ENCODE measurements at regions of chr20 and their contacts with region 1.

Region 1: DNA sequence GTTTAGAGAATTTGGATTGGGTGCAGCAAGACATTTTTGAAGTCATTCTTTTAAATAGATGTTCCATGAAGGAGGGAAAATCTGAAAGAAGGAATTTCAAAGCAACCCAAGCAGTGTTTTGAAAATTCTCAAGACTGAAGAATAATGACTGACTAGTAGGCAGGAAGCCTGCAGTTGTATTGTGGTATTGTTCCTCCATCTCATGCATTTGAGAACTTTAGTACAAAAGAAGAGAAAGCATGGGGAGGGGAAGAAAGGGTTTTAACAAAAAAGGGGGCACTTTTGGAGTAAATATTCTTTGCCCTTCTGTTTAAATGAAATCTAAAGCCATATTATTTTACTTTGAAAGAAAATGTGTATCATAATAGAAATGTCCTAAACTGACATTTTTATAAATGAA is 6.6 kb downstream of the NCOA3 start:
- DNase-seq: no peak
- ATAC-seq: no peak
- H3K4me3 ChIP-seq: no peak overlapping the region
- H3K27ac ChIP-seq: no peak overlapping the region
- H3K4me1 ChIP-seq: peaks cover 32% of the 10 kb centered on the region
- H3K27me3 ChIP-seq: no peaks in the 10 kb centered on the region
- CTCF ChIP-seq: no peak

Region 2: GRCh38 chr20:47196091-47197081 is 311.9 kb before region 1 on chr20:
- CTCF ChIA-PET with region 1: no interaction called
- POLR2A ChIA-PET with region 1: no interaction called
- intact Hi-C with region 1: loop called (anchors 5 kb)
- DNase-seq: peak; percentile 88
- ATAC-seq: peak; percentile 76
- H3K4me3 ChIP-seq: peak overlapping the region; percentile 49
- H3K27ac ChIP-seq: no peak overlapping the region
- H3K4me1 ChIP-seq: peaks cover 29% of the 10 kb centered on the region
- H3K27me3 ChIP-seq: no peaks in the 10 kb centered on the region
- CTCF ChIP-seq: peak; percentile 99

Region 3: DNA sequence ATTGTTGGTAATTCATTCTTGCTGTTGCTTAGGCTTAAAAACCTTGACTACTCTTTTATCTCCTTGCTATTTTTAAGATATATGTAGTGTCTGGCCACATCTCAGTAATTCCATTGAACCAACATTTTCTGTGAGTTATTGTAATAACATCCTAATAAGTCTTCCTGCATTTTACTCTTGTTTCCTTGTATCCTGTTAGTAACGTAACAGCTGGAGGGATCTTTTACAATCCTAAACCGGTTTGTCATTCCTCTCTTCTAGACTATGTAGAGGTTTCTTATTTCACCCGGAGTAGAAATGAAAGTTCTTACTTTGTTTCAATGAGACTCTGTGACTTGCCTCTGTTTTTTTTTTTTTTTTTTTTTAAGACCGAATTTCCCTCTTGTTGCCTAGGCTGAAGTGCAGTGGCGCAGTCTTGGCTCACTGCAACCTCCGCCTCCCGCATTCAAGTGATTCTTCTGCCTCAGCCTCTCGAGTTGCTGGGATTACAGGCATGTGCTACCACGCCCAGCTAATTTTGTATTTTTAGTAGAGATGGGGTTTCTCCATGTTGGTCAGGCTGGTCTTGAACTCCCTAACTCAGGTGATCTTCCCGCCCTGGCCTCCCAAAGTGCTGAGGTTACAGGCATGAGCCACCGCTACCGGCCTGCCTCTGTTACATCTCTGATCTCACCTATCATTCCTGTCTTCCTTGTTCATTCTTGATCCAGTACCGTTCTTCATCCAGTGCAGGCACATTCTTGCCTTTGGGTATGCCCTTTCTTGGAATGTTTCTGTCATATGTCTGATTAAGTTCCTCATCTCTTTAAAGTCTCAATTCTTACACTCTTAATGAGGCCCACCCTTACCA is 38.1 kb after region 1 on chr20:
- CTCF ChIA-PET with region 1: no interaction called
- POLR2A ChIA-PET with region 1: no interaction called
- intact Hi-C with region 1: loop called (anchors 5 kb)
- DNase-seq: peak; percentile 70
- ATAC-seq: peak; percentile 61
- H3K4me3 ChIP-seq: no peak overlapping the region
- H3K27ac ChIP-seq: no peak overlapping the region
- H3K4me1 ChIP-seq: peaks cover 15% of the 10 kb centered on the region; the same call in 1 of the 2 replicates
- H3K27me3 ChIP-seq: no peaks in the 10 kb centered on the region
- CTCF ChIP-seq: no peak